HCT116 (cell line): ENCODE measurements at regions of chr11 and their contacts with region 1.

Region 1: GRCh38 chr11:94504689-94505293 is 7.5 kb upstream of the C11orf97 start:
- DNase-seq: peak; percentile 51
- ATAC-seq: peak; percentile 79
- H3K4me3 ChIP-seq: no peak overlapping the region
- H3K27ac ChIP-seq: no peak overlapping the region
- H3K4me1 ChIP-seq: no peaks in the 10 kb centered on the region
- H3K27me3 ChIP-seq: no peaks in the 10 kb centered on the region
- CTCF ChIP-seq: peak; percentile 55 to 72 (median 69)
- POLR2A ChIP-seq: no peak
- RAD21 ChIP-seq: peak; percentile 86

Region 2: DNA sequence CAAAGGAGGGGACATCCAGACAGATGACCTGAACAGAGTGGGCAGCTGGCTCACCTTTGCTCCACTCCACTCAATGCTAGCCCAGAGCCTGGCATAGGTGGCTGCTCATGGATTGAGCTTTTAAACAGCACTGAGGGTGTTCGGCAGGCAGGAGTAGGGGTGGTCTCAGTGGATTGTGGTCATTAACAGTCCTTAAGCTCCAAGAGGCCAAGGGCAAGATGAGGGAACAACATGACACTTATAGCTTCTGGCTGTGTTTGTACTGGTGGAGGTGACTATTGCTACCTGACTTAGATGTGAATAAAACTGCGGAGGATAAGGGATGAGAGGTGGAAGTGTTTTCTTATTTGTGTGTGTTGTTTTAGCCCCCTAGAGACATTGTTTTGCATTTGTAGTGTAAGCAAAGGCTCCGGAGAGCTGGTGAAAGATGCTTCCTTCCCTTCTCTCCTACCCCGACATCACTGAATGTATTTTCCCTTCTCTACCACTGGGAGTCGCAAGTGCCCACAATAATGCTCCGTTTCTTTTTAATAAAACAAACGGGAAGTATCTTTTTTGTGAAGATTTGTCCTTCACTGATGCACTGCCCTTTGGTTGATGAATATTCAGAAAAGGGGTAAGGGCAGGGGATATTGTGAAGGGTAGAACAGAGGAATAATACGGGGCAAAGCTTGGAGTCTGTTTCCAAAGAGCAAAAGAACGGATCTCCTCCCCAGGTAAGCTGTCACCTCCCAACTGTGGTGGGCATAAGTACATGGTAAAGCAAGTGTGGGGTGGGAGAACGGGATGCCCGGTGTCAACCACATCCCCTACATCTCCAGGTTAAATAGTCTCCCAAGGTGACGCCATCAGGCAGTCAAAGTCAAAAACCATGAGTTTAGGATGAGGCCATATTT is 1562.9 kb before region 1 on chr11:
- CTCF ChIA-PET with region 1: no interaction called
- POLR2A ChIA-PET with region 1: no interaction called
- RAD21 ChIA-PET with region 1: no interaction called
- intact Hi-C with region 1: loop called (anchors 10 kb)
- DNase-seq: peak; percentile 18
- ATAC-seq: peak; percentile 81
- H3K4me3 ChIP-seq: no peak overlapping the region
- H3K27ac ChIP-seq: no peak overlapping the region
- H3K4me1 ChIP-seq: no peaks in the 10 kb centered on the region
- H3K27me3 ChIP-seq: no peaks in the 10 kb centered on the region
- CTCF ChIP-seq: peak; percentile 69 to 84 (median 71)
- POLR2A ChIP-seq: no peak
- RAD21 ChIP-seq: peak; percentile 87

Region 3: DNA sequence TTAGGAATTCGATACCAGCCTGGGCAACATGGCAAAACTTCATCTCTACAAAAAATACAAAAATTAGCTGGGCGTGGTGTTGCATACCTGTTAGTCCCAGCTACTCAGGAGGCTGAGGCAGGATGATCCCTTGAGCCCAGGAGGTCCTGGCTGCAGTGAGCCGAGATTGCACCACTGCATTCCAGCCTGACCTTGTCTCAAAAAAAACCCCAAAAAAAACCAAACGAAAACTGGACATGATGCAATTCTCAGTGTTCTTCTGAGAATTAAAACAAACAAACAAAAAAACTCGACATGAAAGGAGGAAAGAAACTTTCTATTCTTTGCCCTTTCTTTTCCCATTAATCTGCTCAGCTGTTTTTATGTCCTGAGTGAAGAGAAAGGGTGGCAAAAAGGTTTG is 713.3 kb before region 1 on chr11:
- CTCF ChIA-PET with region 1: no interaction called
- POLR2A ChIA-PET with region 1: no interaction called
- RAD21 ChIA-PET with region 1: no interaction called
- intact Hi-C with region 1: loop called (anchors 10 kb)
- DNase-seq: no peak
- ATAC-seq: no peak
- H3K4me3 ChIP-seq: no peak overlapping the region
- H3K27ac ChIP-seq: no peak overlapping the region
- H3K4me1 ChIP-seq: no peaks in the 10 kb centered on the region
- H3K27me3 ChIP-seq: no peaks in the 10 kb centered on the region
- CTCF ChIP-seq: no peak
- POLR2A ChIP-seq: no peak
- RAD21 ChIP-seq: no peak

Region 4: GRCh38 chr11:93921695-93922468 is 582.9 kb before region 1 on chr11:
- CTCF ChIA-PET with region 1: interaction called, 6 read pairs
- POLR2A ChIA-PET with region 1: no interaction called
- RAD21 ChIA-PET with region 1: no interaction called
- intact Hi-C with region 1: loop called (anchors 10 kb)
- DNase-seq: peak; percentile 60
- ATAC-seq: peak; percentile 98
- H3K4me3 ChIP-seq: no peak overlapping the region
- H3K27ac ChIP-seq: no peak overlapping the region
- H3K4me1 ChIP-seq: no peaks in the 10 kb centered on the region
- H3K27me3 ChIP-seq: no peaks in the 10 kb centered on the region
- CTCF ChIP-seq: peak; percentile 61 to 94 (median 79)
- POLR2A ChIP-seq: no peak
- RAD21 ChIP-seq: peak; percentile 89

Region 5: DNA sequence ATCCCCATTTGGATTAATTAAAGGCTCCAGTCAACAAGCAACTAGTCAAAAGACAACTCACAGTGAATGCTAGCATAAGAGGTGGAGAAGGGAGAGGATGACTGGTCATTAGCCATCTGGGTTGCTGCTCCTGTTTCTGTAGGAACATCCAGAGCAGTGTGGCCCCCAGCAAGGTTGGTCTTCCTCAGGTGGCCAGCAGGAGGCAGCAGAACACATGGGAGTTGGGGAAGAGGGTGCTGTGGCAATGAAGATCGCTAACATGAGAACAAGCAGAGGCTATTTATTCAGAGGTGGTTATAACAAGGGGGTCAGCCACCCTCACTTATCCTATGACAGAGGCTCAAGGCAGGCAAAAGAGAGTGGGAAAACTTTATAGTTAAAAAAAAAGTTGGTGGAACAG is 179.1 kb before region 1 on chr11:
- CTCF ChIA-PET with region 1: interaction called, 8 read pairs
- POLR2A ChIA-PET with region 1: no interaction called
- RAD21 ChIA-PET with region 1: no interaction called
- intact Hi-C with region 1: loop called (anchors 1 kb)
- DNase-seq: peak; percentile 41
- ATAC-seq: peak; percentile 94
- H3K4me3 ChIP-seq: no peak overlapping the region
- H3K27ac ChIP-seq: no peak overlapping the region
- H3K4me1 ChIP-seq: no peaks in the 10 kb centered on the region; a peak in 1 of 4 replicates
- H3K27me3 ChIP-seq: no peaks in the 10 kb centered on the region
- CTCF ChIP-seq: peak; percentile 45 to 83 (median 72); a peak in 5 of 6 replicates
- POLR2A ChIP-seq: no peak
- RAD21 ChIP-seq: peak; percentile 75

Region 6: GRCh38 chr11:94376841-94377240 is 128.0 kb before region 1 on chr11:
- CTCF ChIA-PET with region 1: no interaction called
- POLR2A ChIA-PET with region 1: no interaction called
- RAD21 ChIA-PET with region 1: no interaction called
- intact Hi-C with region 1: no loop called
- DNase-seq: no peak
- ATAC-seq: no peak
- H3K4me3 ChIP-seq: no peak overlapping the region
- H3K27ac ChIP-seq: no peak overlapping the region
- H3K4me1 ChIP-seq: no peaks in the 10 kb centered on the region
- H3K27me3 ChIP-seq: no peaks in the 10 kb centered on the region
- CTCF ChIP-seq: no peak
- POLR2A ChIP-seq: no peak
- RAD21 ChIP-seq: no peak

Region 7: DNA sequence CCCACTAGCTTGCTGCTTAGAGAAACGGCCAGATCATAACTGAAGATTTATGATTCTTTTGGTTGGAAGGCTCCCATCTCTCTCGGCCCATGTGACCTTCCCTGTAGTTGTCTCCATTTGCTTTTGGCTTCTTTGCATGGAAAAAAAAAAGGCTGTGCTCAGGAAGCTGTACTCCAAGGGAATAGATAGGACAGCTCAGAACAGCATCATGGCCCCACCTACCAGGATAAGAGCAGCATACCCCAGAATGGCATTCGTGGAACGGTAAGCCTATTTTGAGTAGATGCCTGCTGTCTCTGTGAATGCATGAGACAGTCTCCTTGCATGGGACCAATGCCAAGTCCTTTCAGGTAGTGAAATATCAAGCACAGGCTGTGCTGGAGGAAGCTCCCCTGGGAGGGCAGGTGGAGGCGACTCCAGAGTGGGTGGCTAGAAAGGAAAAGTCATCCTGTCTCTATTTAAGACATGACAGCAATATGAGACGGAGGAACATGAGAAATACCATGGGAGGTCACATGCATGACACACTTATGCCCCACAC is 169.2 kb after region 1 on chr11:
- CTCF ChIA-PET with region 1: no interaction called
- POLR2A ChIA-PET with region 1: no interaction called
- RAD21 ChIA-PET with region 1: no interaction called
- intact Hi-C with region 1: no loop called
- DNase-seq: no peak
- ATAC-seq: no peak
- H3K4me3 ChIP-seq: no peak overlapping the region
- H3K27ac ChIP-seq: no peak overlapping the region
- H3K4me1 ChIP-seq: peaks cover 0 to 10% of the 10 kb centered on the region in 2 experiments; a peak in 1 of 4 replicates
- H3K27me3 ChIP-seq: no peaks in the 10 kb centered on the region
- CTCF ChIP-seq: no peak
- POLR2A ChIP-seq: no peak
- RAD21 ChIP-seq: no peak

Region 8: GRCh38 chr11:94767761-94768601 is 263.2 kb after region 1 on chr11 and contains the start of gene AMOTL1:
- CTCF ChIA-PET with region 1: no interaction called
- POLR2A ChIA-PET with region 1: no interaction called
- RAD21 ChIA-PET with region 1: no interaction called
- intact Hi-C with region 1: no loop called
- DNase-seq: peak; percentile 65
- ATAC-seq: peak; percentile 89
- H3K4me3 ChIP-seq: peak within 1 kb of the TSS; percentile 61 to 67
- H3K27ac ChIP-seq: peak within 1 kb of the TSS; percentile 68
- H3K4me1 ChIP-seq: peaks cover 5 to 23% of the 10 kb centered on the region in 2 experiments; a peak in 3 of 4 replicates
- H3K27me3 ChIP-seq: no peaks in the 10 kb centered on the region
- CTCF ChIP-seq: no peak
- POLR2A ChIP-seq: peak; percentile 21
- RAD21 ChIP-seq: peak; percentile 27; the same call in 1 of the 2 replicates
- total RNA-seq, gene AMOTL1: 27.6 TPM